Posterior cingulate gyrus (tissue), 11 donors: ENCODE measurements at regions of chr18 and their contacts with region 1.

Region 1: DNA sequence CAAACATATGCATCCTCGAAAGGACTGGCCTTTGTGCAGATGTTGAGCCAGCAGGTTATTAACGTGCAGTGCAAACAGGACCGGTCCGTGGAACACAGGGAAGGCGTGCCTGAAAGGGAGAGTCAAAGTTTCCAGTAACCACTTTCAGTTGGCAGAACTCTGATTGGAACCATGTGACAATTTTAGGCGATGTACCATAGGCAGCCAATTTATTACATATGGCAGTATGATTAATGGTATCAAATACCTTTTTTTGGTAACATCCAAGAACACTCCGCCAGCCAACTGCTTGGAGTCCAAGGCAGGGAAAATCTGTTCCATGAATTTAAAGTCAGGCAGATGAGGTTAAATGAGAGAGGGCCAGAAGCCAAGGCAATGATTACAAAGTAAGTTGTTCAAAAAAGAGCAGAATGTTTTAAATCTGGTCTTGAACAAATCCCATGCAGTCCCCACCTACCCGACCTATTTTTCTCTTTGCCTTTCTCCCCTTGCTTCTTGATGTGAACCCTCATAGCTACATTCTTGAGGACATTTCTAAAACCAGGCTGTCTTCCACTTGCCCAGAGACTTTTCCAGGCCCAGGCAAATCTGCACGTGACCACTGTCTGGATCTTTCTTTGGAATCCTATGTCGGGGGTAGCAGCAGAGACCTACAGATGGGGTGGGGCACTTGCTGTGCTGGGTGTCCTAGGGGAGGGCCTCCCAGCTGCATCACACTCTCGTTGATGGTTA is 351.7 kb downstream of the HRH4 start:
- DNase-seq: no peak

Region 2: DNA sequence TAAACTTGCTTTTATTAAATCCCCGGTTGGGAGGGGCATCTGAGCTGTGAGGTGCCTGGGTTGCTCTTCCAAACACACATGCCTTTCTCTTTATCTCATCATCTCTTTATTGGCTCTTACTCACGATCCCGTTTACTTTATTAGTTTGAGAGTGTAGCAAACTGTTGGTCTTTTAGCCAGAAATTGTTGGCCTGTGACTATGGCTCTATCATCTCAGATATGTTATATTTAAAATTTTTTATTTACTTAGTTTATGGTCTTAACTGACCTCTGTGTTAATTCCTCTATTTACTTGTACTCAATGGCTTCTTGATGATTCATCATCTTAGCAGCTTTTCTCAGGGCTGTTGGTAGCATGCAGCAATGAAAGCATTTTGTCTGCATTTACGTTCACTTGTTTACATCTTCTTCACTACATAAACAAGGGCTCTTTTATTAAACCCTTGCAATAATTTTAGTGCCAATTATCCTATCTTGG is 56.7 kb after region 1 on chr18:
- intact Hi-C with region 1: loop called (anchors 10 kb)
- DNase-seq: no peak